ENCODE measurements at regions of chr3 and their contacts with region 1.

Region 1: DNA sequence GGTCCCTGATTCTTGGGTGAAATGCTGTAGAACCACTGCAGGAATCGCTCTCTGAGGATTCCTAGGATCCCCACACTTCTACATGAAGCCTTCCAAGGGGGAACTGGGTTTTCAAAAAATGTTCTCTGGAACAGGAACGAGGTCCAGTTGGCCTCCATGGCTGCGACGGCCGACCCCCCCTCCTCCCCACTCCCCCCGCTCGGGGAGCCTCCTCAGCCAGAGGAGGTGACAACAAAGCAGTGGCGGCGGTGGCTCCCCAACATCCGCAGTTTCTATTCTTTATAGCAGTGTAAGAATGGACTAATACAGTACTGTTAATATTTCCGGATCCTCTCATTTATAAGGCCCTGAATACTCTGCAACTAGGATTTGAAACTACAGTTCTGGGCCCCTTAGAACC is 84.0 kb upstream of the PLAAT1 start:
- DNase-seq: no peak
- H3K4me3 ChIP-seq: no peak overlapping the region
- H3K27ac ChIP-seq: no peak overlapping the region
- H3K4me1 ChIP-seq: no peaks in the 10 kb centered on the region
- CTCF ChIP-seq: no peak

Region 2: DNA sequence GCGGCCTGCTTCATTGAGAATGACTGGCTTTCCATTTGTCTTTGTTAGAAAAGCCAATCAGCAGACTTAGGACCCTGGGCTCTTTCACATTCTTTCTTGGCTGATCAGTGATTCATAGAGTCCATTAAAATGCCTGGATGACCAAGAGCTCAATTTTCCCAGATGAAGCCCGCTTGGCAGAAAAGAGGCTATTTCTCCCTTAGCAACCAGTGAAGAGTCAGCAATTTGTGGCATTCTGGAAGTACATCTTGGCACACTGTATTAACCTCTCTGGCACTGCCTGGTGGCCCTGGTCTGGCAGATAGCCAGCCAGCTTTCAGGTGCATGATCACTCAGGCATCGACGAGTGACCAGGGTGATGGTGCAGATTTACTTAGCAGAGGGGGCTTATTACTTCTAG is 61.7 kb before region 1 on chr3:
- CTCF ChIA-PET with region 1: no interaction called
- POLR2A ChIA-PET with region 1: no interaction called
- intact Hi-C with region 1: no loop called
- DNase-seq: no peak
- H3K4me3 ChIP-seq: no peak overlapping the region
- H3K27ac ChIP-seq: no peak overlapping the region
- H3K4me1 ChIP-seq: no peaks in the 10 kb centered on the region
- CTCF ChIP-seq: no peak

Region 3: GRCh38 chr3:193140381-193140780 is 16.7 kb before region 1 on chr3:
- CTCF ChIA-PET with region 1: no interaction called
- POLR2A ChIA-PET with region 1: no interaction called
- intact Hi-C with region 1: no loop called
- DNase-seq: no peak
- H3K4me3 ChIP-seq: no peak overlapping the region
- H3K27ac ChIP-seq: no peak overlapping the region
- H3K4me1 ChIP-seq: no peaks in the 10 kb centered on the region
- CTCF ChIP-seq: no peak

Region 4: GRCh38 chr3:193168911-193169310 is 11.9 kb after region 1 on chr3:
- CTCF ChIA-PET with region 1: no interaction called
- POLR2A ChIA-PET with region 1: no interaction called
- intact Hi-C with region 1: loop called (anchors 1 kb)
- DNase-seq: no peak
- H3K4me3 ChIP-seq: no peak overlapping the region
- H3K27ac ChIP-seq: no peak overlapping the region
- H3K4me1 ChIP-seq: no peaks in the 10 kb centered on the region
- CTCF ChIP-seq: no peak

Measured in OCI-LY7 (cell line).